BJ (cell line): ENCODE measurements at regions of chr4 and their contacts with region 1.

Region 1: GRCh38 chr4:5165420-5166369 is 114.4 kb downstream of the STK32B start:
- DNase-seq: no peak
- H3K4me3 ChIP-seq: no peak overlapping the region
- H3K27me3 ChIP-seq: no peaks in the 10 kb centered on the region
- CTCF ChIP-seq: no peak

Region 2: GRCh38 chr4:4379540-4380087 is 786.1 kb before region 1 on chr4:
- CTCF ChIA-PET with region 1: no interaction called
- POLR2A ChIA-PET with region 1: interaction called, 21 read pairs
- DNase-seq: no peak
- H3K4me3 ChIP-seq: no peak overlapping the region
- H3K27me3 ChIP-seq: peaks cover 20% of the 10 kb centered on the region
- CTCF ChIP-seq: no peak